K562 (cell line): ENCODE measurements at regions of chr12 and their contacts with region 1.

Region 1: GRCh38 chr12:93990832-93991803 is 157.3 kb upstream of the PLXNC1 start:
- DNase-seq: peak; percentile 13 to 76 (median 31)
- ATAC-seq: peak; percentile 99
- H3K4me3 ChIP-seq: no peak overlapping the region
- H3K27ac ChIP-seq: peak overlapping the region; percentile 6; the same call in 1 of the 3 replicates
- H3K4me1 ChIP-seq: no peaks in the 10 kb centered on the region
- H3K27me3 ChIP-seq: no peaks in the 10 kb centered on the region
- CTCF ChIP-seq: peak; percentile 60 to 72 (median 61)
- EP300 ChIP-seq: no peak
- POLR2A ChIP-seq: no peak
- RAD21 ChIP-seq: peak; percentile 77 to 82

Region 2: DNA sequence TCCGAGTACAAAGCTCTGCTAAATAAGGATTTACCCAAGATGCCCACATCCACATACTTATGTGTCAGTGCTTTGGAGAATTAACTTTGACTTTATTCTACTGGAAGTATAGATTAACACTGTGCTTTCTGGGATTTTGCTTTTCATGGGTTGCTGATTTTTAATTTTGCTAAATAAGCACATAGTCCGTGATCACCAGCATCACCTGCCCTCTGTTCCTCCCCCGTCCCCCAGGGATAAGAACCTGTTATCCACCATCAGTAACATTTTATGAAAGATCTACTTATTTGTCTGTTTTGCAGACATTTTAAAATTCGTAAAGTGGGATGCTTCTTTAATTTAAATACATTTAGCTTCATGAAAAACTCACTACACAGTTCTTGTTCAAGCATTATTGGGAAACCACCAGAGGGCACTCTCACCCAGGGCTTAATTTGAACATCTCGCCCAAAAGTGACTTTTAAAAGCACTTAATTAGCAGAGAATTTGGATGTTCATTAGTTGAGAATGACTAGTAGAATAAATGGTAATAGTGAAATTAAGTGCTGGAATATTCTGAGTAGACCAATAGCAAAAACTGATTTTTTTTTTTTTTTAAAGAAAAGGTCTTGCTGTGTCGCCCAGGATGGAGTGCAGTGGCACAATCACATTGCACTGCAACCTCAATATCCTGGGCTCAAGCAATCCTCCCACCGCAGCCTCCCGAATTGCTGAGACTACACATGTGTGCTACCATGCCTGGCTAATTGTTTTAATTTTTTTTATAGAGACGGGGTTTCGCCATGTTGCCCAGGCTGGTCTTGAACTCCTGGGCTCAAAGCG is 488.1 kb before region 1 on chr12:
- CTCF ChIA-PET with region 1: no interaction called
- POLR2A ChIA-PET with region 1: no interaction called
- in situ Hi-C with region 1: no loop called
- intact Hi-C with region 1: loop called (anchors 10 kb)
- DNase-seq: peak in 2 of 4 experiments; percentile 20 to 64
- ATAC-seq: peak; percentile 76
- H3K4me3 ChIP-seq: no peak overlapping the region
- H3K27ac ChIP-seq: no peak overlapping the region
- H3K4me1 ChIP-seq: no peaks in the 10 kb centered on the region
- H3K27me3 ChIP-seq: no peaks in the 10 kb centered on the region
- CTCF ChIP-seq: peak; percentile 49 to 85 (median 71); a peak in 5 of 6 replicates
- EP300 ChIP-seq: no peak
- POLR2A ChIP-seq: no peak
- RAD21 ChIP-seq: peak; percentile 90 to 92

Region 3: GRCh38 chr12:93634416-93634815 is 356.7 kb before region 1 on chr12:
- CTCF ChIA-PET with region 1: no interaction called
- POLR2A ChIA-PET with region 1: no interaction called
- in situ Hi-C with region 1: no loop called
- intact Hi-C with region 1: no loop called
- DNase-seq: no peak
- ATAC-seq: no peak
- H3K4me3 ChIP-seq: no peak overlapping the region
- H3K27ac ChIP-seq: no peak overlapping the region
- H3K4me1 ChIP-seq: no peaks in the 10 kb centered on the region
- H3K27me3 ChIP-seq: no peaks in the 10 kb centered on the region
- CTCF ChIP-seq: no peak
- EP300 ChIP-seq: no peak
- POLR2A ChIP-seq: no peak
- RAD21 ChIP-seq: no peak

Region 4: GRCh38 chr12:93972411-93973208 is 18.5 kb before region 1 on chr12:
- CTCF ChIA-PET with region 1: no interaction called
- POLR2A ChIA-PET with region 1: no interaction called
- in situ Hi-C with region 1: no loop called
- intact Hi-C with region 1: no loop called
- DNase-seq: no peak
- ATAC-seq: no peak
- H3K4me3 ChIP-seq: no peak overlapping the region
- H3K27ac ChIP-seq: no peak overlapping the region
- H3K4me1 ChIP-seq: peaks cover 0 to 11% of the 10 kb centered on the region in 2 experiments; a peak in 2 of 5 replicates
- H3K27me3 ChIP-seq: no peaks in the 10 kb centered on the region
- CTCF ChIP-seq: no peak
- EP300 ChIP-seq: no peak
- POLR2A ChIP-seq: no peak
- RAD21 ChIP-seq: no peak